Astrocyte of the cerebellum (primary cell): ENCODE measurements at regions of chr6 and their contacts with region 1.

Region 1: DNA sequence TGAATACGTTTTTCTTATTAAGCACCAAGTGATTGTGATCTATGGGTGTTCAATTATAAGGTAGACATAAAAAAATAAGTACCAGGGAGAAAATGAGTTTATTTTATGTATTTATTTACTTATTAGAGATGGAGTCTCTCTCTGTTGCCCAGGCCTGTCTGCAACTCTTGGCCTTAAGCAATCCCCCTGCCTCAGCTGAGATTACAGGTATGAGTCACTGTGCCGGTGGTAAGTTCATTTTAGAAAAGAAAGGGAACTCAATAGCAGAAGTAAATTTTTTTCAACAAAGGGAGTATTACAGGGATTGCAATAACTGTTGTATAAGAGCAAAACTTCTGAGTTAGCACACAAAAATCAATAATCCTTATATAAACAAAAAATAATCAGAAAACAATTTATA is 98.7 kb upstream of the FUT9 start:
- DNase-seq: no peak
- H3K4me3 ChIP-seq: no peak overlapping the region
- CTCF ChIP-seq: no peak

Region 2: DNA sequence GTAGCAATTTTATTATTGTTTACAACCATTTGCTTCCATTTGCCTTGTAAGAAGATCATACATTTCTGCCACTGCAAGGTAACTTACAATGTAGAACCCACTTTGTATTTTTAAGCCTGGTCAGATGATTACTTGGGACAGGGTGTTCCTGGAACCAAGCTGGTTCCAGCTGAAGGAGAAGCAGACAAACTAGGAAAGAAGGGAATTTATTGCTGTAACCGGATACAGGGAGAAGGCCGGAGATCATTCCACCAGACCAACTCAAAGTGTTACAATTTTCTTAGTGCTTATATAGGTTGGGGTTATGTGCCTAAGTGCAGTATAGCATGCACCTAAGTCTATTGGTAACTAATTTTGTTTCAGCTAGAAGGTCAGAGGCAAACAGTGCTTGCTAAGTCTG is 235.3 kb before region 1 on chr6:
- in situ Hi-C with region 1: no loop called
- DNase-seq: no peak
- H3K4me3 ChIP-seq: no peak overlapping the region
- CTCF ChIP-seq: no peak

Region 3: DNA sequence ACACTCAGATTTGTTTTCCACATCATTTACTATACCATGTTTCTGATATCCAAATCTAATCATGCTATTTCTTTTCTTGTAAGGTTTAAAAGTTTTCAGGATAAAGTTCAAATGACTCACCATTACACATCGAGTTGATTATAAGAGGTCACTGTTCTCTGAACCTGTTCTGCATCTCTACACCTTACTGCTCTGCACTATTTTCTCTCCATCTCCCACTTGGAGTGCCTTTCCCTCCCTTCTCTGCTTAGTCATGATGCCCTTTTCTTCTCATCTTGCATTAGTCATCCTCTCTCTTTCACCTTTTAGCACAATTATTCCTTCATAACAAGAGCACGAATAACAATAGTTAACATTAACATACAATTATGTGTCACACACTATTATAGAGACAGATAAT is 61.2 kb after region 1 on chr6:
- in situ Hi-C with region 1: loop called (anchors 5 kb)
- DNase-seq: no peak
- H3K4me3 ChIP-seq: no peak overlapping the region
- CTCF ChIP-seq: no peak